HAP-1 (cell line): ENCODE measurements at regions of chr15 and their contacts with region 1.

Region 1: GRCh38 chr15:56491110-56491722 is 26.3 kb upstream of the MNS1 start:
- DNase-seq: peak; percentile 58 to 80
- H3K4me3 ChIP-seq: no peak overlapping the region
- H3K4me1 ChIP-seq: no peaks in the 10 kb centered on the region
- H3K27me3 ChIP-seq: no peaks in the 10 kb centered on the region

Region 2: GRCh38 chr15:56871180-56871579 is 380.0 kb after region 1 on chr15:
- in situ Hi-C with region 1: loop called (anchors 5 kb)
- DNase-seq: peak in 1 of 2 experiments; percentile 18
- H3K4me3 ChIP-seq: no peak overlapping the region
- H3K4me1 ChIP-seq: peaks cover 27% of the 10 kb centered on the region
- H3K27me3 ChIP-seq: no peaks in the 10 kb centered on the region

Region 3: GRCh38 chr15:57138349-57138788 is 647.2 kb after region 1 on chr15:
- in situ Hi-C with region 1: loop called (anchors 10 kb)
- DNase-seq: peak; percentile 63 to 81
- H3K4me3 ChIP-seq: no peak overlapping the region
- H3K4me1 ChIP-seq: peaks cover 21% of the 10 kb centered on the region
- H3K27me3 ChIP-seq: no peaks in the 10 kb centered on the region

Region 4: GRCh38 chr15:57306161-57306943 is 815.1 kb after region 1 on chr15:
- in situ Hi-C with region 1: loop called (anchors 10 kb)
- DNase-seq: peak; percentile 43 to 96
- H3K4me3 ChIP-seq: peak overlapping the region; percentile 25
- H3K4me1 ChIP-seq: peaks cover 9% of the 10 kb centered on the region
- H3K27me3 ChIP-seq: no peaks in the 10 kb centered on the region

Region 5: DNA sequence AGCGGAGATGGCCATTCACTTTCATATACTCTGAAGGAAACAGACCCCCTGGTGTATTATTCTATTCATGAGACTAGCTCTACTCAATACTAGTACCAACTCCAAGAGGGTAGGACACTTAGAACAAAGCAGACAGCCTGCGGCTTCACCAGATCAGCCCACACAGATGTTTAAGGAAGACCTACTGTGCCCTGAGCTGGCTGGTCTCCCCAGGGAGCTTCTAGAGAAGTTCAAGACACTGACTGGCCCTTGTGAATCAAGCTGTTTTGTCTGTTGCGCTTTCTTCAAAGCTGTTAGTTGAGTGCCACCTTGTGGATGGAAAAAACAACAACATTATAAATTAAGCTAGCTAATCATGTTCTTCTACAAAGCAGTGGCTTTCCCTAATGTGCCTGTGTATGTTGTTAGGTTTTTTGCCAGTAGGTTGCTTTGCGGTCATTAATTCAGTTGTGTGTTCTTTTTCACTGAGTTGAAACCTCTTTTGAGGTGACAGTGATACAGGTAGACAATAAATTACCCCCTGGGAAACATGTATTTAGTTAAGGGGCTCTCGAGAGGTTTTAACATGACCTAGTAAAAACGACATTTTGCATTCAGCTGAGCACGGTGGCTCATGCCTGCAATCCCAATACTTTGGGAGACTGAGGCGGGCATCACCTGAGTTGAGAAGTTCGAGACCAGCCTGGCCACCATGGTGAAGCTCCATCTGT is 1036.3 kb after region 1 on chr15:
- in situ Hi-C with region 1: loop called (anchors 25 kb)
- DNase-seq: peak; percentile 72 to 89
- H3K4me3 ChIP-seq: no peak overlapping the region
- H3K4me1 ChIP-seq: peaks cover 16% of the 10 kb centered on the region
- H3K27me3 ChIP-seq: no peaks in the 10 kb centered on the region